ENCODE measurements at regions of chr4 and their contacts with region 1.

Region 1: DNA sequence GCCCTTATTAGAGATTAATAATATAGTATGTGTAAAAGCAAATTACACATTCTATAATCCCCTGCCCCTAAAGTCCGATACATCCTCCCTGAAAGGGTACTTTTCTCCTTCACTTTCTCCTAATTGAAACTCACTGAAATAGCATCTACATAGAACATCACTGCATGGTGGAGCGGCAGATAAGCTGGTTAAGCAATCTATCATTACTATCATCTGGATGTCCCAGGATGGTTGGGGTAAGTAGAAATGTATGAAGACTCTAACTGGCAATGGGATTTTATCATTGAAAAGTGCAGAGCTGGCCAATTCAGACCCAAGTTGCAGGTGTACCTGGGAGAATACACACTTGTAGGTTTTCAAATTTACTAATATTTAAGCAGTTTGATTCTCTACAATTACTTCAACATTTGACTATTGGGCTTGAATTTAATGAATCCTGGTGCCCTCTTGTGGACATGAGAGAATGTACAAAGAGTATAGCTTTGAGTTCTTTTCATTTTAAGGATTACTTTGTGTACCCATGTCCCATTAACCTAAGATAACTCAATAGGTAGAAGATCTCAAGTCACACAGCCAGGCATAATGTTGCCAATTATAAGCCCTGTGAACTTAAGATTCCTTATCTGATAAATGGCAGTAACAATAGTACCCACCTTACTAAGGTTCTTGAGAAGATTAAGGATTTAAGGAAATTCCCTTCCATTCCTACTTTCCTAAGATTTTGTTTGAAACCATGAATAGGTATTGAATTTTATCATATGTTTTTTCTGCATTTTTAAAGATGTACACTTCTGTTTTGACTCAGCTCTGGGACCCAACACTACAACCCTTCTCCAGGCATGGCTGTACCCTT is 69.8 kb downstream of the SHROOM3 start:
- DNase-seq: no peak
- ATAC-seq: peak in 1 of 2 donors; percentile 35

Region 2: DNA sequence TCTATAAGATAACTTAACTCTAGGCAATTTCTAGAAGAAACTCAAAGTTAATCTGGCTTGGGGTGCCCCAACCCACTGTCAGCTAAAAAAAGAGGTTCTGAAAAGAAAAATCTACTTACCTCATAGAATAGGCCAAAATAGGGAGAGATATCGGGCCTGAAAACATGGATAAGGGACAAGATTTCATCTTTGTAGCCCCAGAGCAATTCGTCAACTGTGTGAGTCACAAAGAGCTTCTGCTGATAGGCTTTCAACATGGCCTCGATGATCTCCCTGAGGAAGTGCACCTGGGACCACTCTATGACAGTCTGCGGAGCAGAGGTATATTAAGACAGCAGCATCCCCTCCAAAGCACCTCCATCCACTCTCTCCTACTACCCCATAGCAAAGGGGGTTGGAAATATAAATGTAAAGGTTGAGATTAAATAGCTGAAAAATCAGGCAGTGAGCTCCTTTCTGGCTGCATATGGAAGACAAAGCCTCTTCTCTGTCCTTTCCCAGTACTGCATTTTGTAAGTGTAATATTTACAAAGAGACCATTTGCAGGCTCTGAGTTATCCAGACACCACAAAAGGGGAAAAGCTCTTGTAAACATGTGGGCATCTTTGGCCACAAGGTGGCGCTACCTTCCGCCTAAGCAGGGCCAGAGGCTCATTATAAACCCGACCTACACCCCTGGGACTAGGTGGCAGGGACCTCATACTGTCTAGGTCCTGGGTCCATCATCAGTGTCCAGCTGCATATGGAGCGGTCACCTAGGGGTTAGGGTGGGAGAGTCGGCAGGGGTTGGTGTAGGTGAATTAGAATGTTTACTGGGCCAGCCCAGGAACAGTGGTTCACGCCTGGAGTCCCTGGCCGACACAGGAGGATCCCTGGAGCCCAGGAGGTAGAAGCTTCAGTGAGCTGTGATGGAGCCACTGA is 325.2 kb before region 1 on chr4:
- intact Hi-C with region 1: loop called in 1 of 2 experiments (anchors 10 kb)
- DNase-seq: peak; percentile 91
- ATAC-seq: peak; percentile 88 to 90

Region 3: DNA sequence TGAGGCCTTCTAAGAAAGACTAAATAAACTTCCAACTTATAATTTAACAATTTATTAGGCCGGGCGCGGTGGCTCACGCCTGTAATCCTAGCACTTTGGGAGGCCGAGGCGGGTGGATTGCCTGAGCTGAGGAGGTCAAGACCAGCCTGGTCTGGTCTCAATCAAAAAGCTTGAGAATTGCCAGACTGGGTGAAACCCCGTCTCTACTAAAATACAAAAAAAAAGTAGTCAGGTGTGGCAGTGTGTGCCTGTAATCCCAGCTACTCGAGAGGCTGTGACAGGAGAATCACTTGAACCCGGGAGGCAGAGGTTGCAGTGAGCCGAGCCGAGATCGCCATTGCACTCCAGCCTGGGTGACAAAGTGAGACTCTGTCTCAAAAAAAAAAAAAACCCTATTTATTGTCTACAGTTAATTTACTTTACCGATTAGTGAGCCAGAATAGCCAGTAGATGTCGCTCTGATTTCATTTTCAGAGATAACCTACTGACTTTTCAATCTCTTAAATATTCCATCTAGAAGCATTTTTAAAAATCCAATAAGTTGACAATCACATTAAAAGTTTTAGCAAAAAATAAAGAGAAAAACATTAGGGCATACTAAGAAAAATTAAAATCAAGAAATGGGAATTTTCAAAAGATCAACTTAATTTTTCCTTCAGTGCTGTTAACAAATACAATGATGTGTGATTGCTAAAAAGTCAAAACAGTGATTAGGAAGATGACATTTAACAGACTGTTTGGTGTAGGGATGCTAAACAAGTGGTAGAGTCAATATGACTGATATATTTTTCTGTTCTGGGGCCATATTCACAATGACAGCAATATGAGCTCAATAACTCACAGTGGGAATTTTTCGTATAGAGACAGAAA is 74.1 kb before region 1 on chr4:
- intact Hi-C with region 1: loop called (anchors 2 to 10 kb)
- DNase-seq: no peak
- ATAC-seq: no peak

Region 4: GRCh38 chr4:76624241-76624681 is 119.4 kb after region 1 on chr4:
- intact Hi-C with region 1: no loop called
- DNase-seq: no peak
- ATAC-seq: peak; percentile 83 to 92

Measured in left cardiac atrium (tissue), 4 donors.